Activated naive CD4-positive, alpha-beta T cell treated with anti-CD3 and anti-CD28 coated beads, Interleukin-2, amount 10 ng/mL, durations not matched to agents 7 days and 5 days (primary cell): ENCODE measurements at regions of chr17 and their contacts with region 1.

Region 1: GRCh38 chr17:81101614-81102306 is 63.5 kb upstream of the PVALEF start:
- DNase-seq: peak; percentile 91
- H3K4me3 Mint-ChIP-seq: no peak overlapping the region
- H3K27ac Mint-ChIP-seq: no peak overlapping the region
- H3K4me1 Mint-ChIP-seq: peaks cover under 1% of the 10 kb centered on the region
- H3K27me3 Mint-ChIP-seq: peaks cover 36% of the 10 kb centered on the region

Region 2: GRCh38 chr17:80987941-80988461 is 113.8 kb before region 1 on chr17:
- CTCF ChIA-PET with region 1: interaction called, 17 read pairs
- DNase-seq: no peak
- H3K4me3 Mint-ChIP-seq: no peak overlapping the region
- H3K27ac Mint-ChIP-seq: no peak overlapping the region
- H3K4me1 Mint-ChIP-seq: peaks cover 25% of the 10 kb centered on the region
- H3K27me3 Mint-ChIP-seq: peaks cover 60% of the 10 kb centered on the region

Region 3: GRCh38 chr17:81018044-81018802 is 83.5 kb before region 1 on chr17:
- CTCF ChIA-PET with region 1: interaction called, 15 read pairs
- DNase-seq: peak; percentile 73
- H3K4me3 Mint-ChIP-seq: peak overlapping the region; percentile 74
- H3K27ac Mint-ChIP-seq: peak overlapping the region; percentile 96
- H3K4me1 Mint-ChIP-seq: peaks cover 48% of the 10 kb centered on the region
- H3K27me3 Mint-ChIP-seq: peaks cover 4% of the 10 kb centered on the region

Region 4: GRCh38 chr17:81025065-81025740 is 76.6 kb before region 1 on chr17:
- CTCF ChIA-PET with region 1: interaction called, 15 read pairs
- DNase-seq: no peak
- H3K4me3 Mint-ChIP-seq: no peak overlapping the region
- H3K27ac Mint-ChIP-seq: no peak overlapping the region
- H3K4me1 Mint-ChIP-seq: peaks cover 17% of the 10 kb centered on the region
- H3K27me3 Mint-ChIP-seq: peaks cover 63% of the 10 kb centered on the region

Region 5: DNA sequence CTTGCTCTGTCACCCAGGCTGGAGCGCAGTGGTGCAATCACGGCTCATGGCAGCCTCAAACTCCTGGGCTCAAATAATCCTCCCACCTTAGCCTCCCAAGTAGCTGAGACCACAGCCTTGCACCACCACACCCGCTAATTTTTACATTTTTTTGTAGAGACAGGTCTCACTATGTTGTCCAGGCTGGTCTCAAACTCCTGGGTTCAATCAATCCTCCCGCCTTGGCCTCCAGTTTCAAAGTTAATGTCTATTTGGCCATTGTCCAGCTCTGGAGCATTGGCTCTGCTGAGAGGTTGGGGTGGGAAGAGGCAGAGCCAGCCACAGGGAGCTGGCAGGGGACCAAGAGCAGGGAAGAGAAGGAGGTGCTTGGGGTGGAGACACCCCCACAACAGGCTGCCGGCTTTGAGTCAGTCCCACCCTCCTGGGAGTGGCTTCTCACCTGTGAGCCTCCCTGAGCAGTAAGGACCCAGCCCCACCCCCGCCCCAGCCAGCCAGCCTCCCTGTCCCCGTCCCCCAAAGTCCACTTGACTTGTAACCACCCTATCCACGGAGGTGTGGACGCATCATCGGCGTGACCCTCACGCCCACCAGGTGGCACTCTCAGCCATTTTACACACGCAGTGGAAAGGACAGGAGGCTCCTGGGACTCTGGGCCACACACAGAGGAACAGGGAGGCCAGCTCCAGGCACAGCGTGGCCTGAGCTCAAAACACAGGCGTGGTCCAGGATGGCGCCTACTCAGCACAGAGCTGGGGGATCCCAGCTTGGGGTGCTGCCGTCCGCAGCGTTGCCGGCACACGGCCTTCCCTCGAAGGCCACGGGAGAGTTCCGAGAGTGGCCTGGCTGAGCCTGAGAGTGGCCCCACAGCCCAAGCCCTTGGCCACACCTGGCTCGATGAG is 40.8 kb after region 1 on chr17:
- CTCF ChIA-PET with region 1: no interaction called
- DNase-seq: peak; percentile 80
- H3K4me3 Mint-ChIP-seq: no peak overlapping the region
- H3K27ac Mint-ChIP-seq: no peak overlapping the region
- H3K4me1 Mint-ChIP-seq: no peaks in the 10 kb centered on the region
- H3K27me3 Mint-ChIP-seq: no peaks in the 10 kb centered on the region